Left colon (tissue), 2 donors: ENCODE measurements at regions of chr11 and their contacts with region 1.

Region 1: GRCh38 chr11:29019960-29020683 is 911.9 kb downstream of the METTL15 start:
- DNase-seq: no peak
- ATAC-seq: no peak

Region 2: DNA sequence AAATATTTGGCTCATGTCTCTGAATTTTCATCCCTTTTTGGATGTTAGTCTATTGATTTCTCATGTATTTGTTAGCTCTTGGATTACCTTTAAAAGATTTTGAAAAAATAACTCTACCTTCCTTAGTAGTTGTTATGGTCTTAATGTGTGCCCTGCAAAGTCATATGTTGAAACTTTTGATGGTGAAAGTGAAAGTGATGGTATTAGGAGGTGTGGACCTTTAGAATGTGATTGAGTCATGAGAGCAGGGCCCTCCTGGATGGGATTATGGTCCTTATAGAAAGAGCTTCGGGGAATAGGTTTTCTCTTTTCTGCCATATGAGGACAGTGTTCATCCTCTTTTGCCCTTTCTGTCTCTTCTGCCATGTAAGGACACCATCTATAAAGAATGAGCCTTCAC is 1599.6 kb after region 1 on chr11:
- intact Hi-C with region 1: loop called in 1 of 2 experiments (anchors 10 kb)
- DNase-seq: no peak
- ATAC-seq: no peak